Heart left ventricle (tissue), 16 donors: ENCODE measurements at regions of chr19 and their contacts with region 1.

Region 1: DNA sequence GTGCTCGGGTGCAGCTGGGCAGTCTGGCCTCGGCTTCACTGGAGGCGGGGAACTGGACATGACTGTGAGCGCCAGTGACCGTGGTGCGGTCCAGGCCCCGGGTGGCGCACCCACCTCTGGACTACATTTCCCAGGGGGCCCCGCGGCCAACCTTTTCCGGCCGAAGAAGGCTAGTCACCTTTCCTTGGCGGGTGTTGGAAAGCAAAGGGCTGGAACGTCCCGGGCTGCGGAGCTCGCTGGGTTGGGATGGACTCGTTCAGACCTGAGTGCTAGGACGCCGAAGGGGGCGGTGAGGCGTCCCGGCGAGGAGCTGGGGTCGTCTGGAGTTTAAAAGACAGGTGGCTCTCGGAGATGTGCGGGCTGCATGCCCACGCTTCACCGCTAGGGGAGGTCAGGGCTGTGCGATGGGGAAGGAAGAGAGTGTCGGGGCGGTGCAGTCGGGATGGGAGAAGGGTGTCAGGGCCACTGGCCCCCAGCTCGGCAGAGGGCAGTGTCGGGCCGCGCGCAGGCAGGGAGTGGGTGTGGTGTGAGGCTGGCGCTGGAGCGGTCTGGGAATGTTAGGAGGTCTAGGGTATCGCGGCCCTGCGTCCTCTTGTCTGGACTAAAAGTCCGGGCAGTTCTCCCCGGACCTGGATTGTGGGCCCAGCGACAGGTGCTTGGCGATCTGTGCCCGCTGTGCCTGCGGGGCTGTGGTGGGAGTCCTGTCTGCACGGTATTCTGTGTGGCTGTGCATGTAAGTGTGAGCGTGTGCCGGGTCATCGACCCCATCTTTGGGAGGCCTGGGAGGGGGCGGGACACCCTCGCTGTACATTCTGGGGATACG is 57.1 kb downstream of the ZNF568 start:
- DNase-seq: peak; percentile 88 to 94 (median 90)
- ATAC-seq: peak; percentile 99 to 100 (median 100)
- H3K4me3 ChIP-seq: peak overlapping the region; percentile 24 to 91 (median 72)
- H3K27ac ChIP-seq: peak overlapping the region in 11 of 12 donors; percentile 41 to 89 (median 78)
- H3K4me1 ChIP-seq: peaks cover 0 to 21% (median 11%) of the 10 kb centered on the region in 12 donors
- H3K27me3 ChIP-seq: no peaks in the 10 kb centered on the region
- CTCF ChIP-seq: peak; percentile 74 to 97 (median 92)
- POLR2A ChIP-seq: peak in 1 of 2 donors; percentile 28

Region 2: DNA sequence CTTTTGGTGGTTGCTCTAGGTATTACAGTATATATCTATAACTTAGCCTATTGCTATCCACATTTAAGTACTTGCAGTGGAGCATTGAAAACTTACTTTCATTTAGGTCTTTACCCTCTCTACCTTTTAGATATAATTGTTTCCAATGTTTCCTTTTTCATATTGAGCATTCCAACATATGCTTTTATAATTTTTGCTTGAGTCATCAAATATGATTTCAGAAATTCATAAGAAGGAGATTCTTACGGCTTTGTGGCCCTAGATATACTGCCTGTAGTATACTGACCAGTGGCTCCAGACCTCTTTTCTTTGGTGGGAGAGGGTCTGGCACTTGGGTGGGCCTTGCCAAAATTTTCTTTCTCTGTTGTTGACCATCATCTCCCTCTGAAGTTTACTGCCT is 167.9 kb before region 1 on chr19:
- intact Hi-C with region 1: no loop called
- DNase-seq: no peak
- ATAC-seq: no peak
- H3K4me3 ChIP-seq: no peak overlapping the region
- H3K27ac ChIP-seq: no peak overlapping the region
- H3K4me1 ChIP-seq: no peaks in the 10 kb centered on the region
- H3K27me3 ChIP-seq: no peaks in the 10 kb centered on the region
- CTCF ChIP-seq: peak in 1 of 12 donors; percentile 38
- POLR2A ChIP-seq: no peak

Region 3: DNA sequence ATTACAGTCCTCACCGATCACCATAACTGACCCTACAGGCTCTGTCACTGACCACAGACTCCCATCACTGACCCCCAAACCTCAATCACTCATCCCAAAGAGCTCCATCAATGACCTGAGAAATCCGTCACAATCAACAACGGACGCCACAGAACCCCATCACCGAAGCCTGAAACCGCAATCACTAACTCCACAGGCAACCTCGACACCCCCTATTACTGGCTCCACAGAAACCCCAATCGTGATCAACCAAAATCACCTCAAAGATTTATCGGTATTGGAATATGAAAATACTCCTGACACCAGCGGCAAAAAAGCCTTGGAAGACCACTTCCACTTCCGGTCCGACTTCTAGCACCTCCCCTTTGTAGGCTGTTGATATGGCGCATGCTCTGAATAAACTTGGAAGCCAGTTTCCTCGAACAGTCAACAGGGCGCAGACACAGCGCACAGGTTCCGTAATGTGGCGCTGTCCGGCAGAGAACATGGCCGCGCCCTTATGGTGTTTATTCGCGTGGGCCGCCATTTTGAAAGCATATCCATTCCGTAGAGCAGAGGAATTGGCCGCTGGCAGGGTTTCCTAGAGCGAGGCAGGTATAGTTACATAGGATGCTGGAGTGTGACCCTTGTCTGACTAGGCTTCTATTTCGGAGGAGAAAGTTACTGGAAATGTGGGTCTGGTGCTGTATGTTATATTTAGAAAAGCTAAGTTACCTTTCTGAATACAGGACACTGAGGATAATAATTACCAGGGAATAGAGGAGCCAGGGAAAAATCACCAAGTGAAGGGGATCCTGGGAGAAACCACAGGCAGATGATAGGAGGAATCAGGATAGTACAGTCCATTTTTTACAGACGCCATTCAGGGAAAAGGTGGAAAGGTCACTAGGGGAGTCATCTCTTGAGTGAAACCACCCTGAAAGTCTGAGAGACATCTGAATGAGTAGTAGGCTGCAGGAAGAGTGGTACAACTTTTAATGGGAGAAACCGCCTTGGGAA is 199.4 kb after region 1 on chr19 and contains the start of gene ZNF585A:
- intact Hi-C with region 1: loop called in 2 of 10 experiments (anchors 1 to 10 kb)
- DNase-seq: peak; percentile 93 to 95 (median 93)
- ATAC-seq: peak; percentile 100
- H3K4me3 ChIP-seq: peak within 1 kb of the TSS; percentile 49 to 81 (median 68)
- H3K27ac ChIP-seq: peak within 1 kb of the TSS in 11 of 12 donors; percentile 6 to 82 (median 67)
- H3K4me1 ChIP-seq: peaks cover 0 to 14% (median 7%) of the 10 kb centered on the region in 12 donors
- H3K27me3 ChIP-seq: no peaks in the 10 kb centered on the region
- CTCF ChIP-seq: peak in 7 of 12 donors; percentile 21 to 59 (median 34)
- POLR2A ChIP-seq: peak in 1 of 2 donors; percentile 32
- total RNA-seq, gene ZNF585A: 6.5 to 14.8 (median 11.3) TPM

Region 4: GRCh38 chr19:37227996-37228395 is 254.8 kb after region 1 on chr19:
- intact Hi-C with region 1: loop called in 2 of 10 experiments (anchors 5 kb)
- DNase-seq: no peak
- ATAC-seq: no peak
- H3K4me3 ChIP-seq: no peak overlapping the region
- H3K27ac ChIP-seq: no peak overlapping the region
- H3K4me1 ChIP-seq: no peaks in the 10 kb centered on the region
- H3K27me3 ChIP-seq: no peaks in the 10 kb centered on the region
- CTCF ChIP-seq: peak; percentile 29 to 65 (median 54)
- POLR2A ChIP-seq: no peak